ENCODE measurements at regions of chr20 and their contacts with region 1.

Region 1: DNA sequence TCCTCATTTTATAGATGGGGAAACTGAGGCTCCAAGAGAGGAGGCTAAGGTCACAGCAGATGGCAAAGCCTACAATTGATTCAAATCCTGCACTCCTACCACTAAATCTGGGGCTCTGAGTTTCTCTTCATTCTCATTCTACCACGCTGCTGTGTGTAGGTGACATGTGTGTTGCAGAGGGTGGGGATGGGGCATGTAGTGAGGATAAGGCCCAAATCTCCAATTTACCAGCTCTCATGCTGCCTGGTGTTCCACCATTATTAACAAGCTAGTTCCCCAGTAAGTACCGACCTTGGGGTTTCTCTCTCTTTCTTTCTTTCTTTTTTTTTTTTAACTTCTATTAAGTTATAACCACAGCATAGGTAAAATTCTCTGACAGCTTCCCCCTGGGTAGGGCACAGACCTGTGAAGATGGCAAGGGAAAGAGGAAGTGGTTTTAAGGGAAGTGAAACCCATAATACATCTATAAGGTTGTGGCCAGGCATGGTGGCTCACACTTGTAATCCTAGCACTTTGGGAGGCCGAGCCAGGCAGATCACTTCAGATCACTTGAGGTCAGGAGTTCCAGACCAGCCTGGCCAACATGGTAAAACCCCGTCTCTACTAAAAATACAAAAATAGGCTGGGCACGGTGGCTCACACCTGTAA is 13.0 kb upstream of the MATN4 start:
- DNase-seq: no peak
- H3K4me3 ChIP-seq: no peak overlapping the region
- H3K27ac ChIP-seq: no peak overlapping the region
- H3K4me1 ChIP-seq: peaks cover 16% of the 10 kb centered on the region
- H3K27me3 ChIP-seq: peaks cover 4% of the 10 kb centered on the region
- CTCF ChIP-seq: no peak

Region 2: GRCh38 chr20:45268531-45268930 is 52.5 kb before region 1 on chr20:
- CTCF ChIA-PET with region 1: no interaction called
- POLR2A ChIA-PET with region 1: no interaction called
- intact Hi-C with region 1: no loop called
- DNase-seq: no peak
- H3K4me3 ChIP-seq: no peak overlapping the region
- H3K27ac ChIP-seq: no peak overlapping the region
- H3K4me1 ChIP-seq: no peaks in the 10 kb centered on the region
- H3K27me3 ChIP-seq: peaks cover 20% of the 10 kb centered on the region
- CTCF ChIP-seq: no peak

Region 3: DNA sequence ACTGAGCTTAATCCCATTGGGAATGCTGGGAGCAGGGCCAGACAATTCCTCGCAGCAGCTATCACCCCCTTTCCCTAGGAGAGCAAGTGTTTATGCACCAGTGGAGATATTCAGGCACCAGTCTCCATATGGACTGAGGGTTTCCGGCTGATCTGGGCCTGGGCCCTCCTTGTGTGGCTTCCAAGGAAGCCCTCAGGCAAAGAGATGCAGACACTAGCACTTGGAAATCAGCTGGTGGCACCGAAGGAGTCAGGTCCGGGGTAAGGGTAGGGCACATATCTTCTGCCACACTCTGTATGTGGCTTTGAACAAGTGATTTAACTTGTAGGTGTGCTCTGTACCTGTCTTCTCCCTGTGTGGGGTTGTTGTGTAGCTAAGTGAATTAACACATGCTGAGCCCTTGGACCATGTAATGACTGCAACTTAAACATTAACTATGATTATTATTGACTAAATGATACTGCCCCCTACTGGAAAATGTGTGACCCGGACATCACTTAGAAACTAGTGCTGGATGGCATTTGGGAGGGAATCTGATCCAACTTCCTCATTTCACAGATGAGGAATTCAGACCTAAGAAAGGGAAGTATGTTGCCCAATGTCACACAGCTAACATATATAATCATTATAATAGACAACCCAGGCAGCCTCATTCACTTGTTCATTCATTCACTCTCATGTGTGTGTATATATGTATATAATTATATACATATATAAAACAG is 129.2 kb after region 1 on chr20:
- CTCF ChIA-PET with region 1: interaction called, 5 read pairs
- POLR2A ChIA-PET with region 1: no interaction called
- intact Hi-C with region 1: loop called (anchors 1 kb)
- DNase-seq: peak; percentile 73
- H3K4me3 ChIP-seq: no peak overlapping the region
- H3K27ac ChIP-seq: no peak overlapping the region
- H3K4me1 ChIP-seq: no peaks in the 10 kb centered on the region
- H3K27me3 ChIP-seq: no peaks in the 10 kb centered on the region
- CTCF ChIP-seq: peak; percentile 79

Measured in A673 (cell line).